ENCODE measurements at regions of chr1 and their contacts with region 1.

Region 1: DNA sequence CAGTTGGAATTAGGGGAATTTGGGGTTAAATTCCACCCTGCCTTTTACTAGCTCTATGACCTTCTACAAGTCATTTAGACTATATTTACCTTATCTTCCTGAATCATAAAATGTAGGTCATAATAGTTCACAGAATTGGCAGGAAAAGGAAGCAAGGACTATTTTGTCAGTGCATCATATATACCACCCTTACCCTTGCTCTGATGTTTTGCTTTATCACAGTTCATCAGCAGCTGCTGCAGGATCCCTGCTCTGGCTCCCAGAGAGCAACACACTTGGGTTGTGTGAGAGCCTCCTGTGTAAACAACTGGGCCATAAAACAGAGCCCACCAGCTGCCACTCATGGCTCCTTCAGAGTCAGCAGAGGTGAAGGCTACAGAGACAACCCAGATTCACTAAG is 631.6 kb upstream of the CAMK1G start:
- DNase-seq: peak; percentile 93
- H3K4me3 ChIP-seq: no peak overlapping the region
- H3K27ac ChIP-seq: peak overlapping the region; percentile 11
- H3K4me1 ChIP-seq: peaks cover 17% of the 10 kb centered on the region
- H3K27me3 ChIP-seq: no peaks in the 10 kb centered on the region
- CTCF ChIP-seq: no peak
- POLR2A ChIP-seq: peak; percentile 27

Region 2: DNA sequence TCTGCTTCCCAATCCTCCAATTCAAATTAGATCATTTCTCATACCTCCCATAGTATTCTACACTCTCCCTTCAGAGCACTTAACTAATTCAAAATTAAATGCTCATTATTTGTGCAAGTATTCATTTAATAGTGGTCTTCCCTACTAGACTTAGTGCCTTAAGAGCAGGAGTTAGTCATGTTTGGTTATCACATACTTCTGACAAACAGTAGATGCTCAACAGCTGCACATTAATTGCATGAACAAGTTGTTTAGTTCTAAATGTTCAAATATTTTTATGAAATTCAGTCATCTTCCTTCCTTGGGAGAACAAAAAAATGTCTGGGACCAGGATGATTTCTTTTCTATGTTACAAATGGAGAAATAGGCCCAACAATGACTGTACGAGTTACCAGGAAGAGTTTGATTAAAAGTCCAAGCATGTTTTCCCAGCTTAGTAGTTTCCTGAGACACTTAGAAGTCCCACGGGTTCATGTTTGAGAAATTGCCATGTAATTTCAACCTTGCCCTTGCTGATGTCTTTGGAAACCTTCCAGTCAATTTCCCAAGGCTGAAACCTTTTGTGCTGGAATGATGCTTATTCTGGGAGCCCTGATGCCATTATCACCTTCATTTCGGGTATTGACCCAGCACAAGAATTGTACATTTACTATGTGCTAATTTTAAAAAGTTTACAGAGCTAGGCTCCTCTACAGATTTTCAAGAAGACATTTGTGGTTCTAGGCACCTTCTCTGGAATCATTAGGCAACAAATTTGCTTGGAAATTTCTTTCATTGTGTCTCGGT is 269.8 kb before region 1 on chr1:
- CTCF ChIA-PET with region 1: no interaction called
- POLR2A ChIA-PET with region 1: no interaction called
- dilution Hi-C with region 1: no loop called
- intact Hi-C with region 1: loop called (anchors 2 kb)
- DNase-seq: peak; percentile 94
- H3K4me3 ChIP-seq: no peak overlapping the region
- H3K27ac ChIP-seq: peak overlapping the region; percentile 43
- H3K4me1 ChIP-seq: peaks cover 12% of the 10 kb centered on the region
- H3K27me3 ChIP-seq: no peaks in the 10 kb centered on the region
- CTCF ChIP-seq: no peak
- POLR2A ChIP-seq: no peak

Region 3: DNA sequence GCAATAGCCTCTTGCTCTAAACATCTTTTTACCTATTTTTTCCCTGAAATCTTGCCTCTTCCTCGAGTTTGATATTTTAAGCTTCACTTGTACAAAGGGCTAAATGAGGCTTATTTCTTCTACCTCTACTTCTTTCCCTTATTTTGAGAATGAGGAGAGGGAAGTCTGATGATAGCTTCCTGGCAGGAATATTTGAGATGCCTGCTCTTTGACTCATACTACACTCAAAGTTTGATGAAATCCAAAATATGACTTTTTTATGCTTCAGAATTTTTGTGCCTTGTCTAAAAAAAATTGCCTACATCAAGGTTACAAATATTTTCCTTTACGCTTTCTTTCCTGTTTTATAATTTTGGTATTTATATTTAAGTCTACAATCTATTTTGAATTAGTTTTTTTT is 83.4 kb before region 1 on chr1:
- CTCF ChIA-PET with region 1: no interaction called
- POLR2A ChIA-PET with region 1: no interaction called
- dilution Hi-C with region 1: no loop called
- intact Hi-C with region 1: loop called (anchors 5 kb)
- DNase-seq: peak; percentile 35
- H3K4me3 ChIP-seq: no peak overlapping the region
- H3K27ac ChIP-seq: no peak overlapping the region
- H3K4me1 ChIP-seq: peaks cover 6% of the 10 kb centered on the region
- H3K27me3 ChIP-seq: no peaks in the 10 kb centered on the region
- CTCF ChIP-seq: no peak
- POLR2A ChIP-seq: no peak

Region 4: GRCh38 chr1:208979776-208980175 is 27.9 kb after region 1 on chr1:
- CTCF ChIA-PET with region 1: no interaction called
- POLR2A ChIA-PET with region 1: no interaction called
- dilution Hi-C with region 1: no loop called
- intact Hi-C with region 1: loop called (anchors 2 kb)
- DNase-seq: no peak
- H3K4me3 ChIP-seq: no peak overlapping the region
- H3K27ac ChIP-seq: no peak overlapping the region
- H3K4me1 ChIP-seq: peaks cover 18% of the 10 kb centered on the region
- H3K27me3 ChIP-seq: no peaks in the 10 kb centered on the region
- CTCF ChIP-seq: no peak
- POLR2A ChIP-seq: no peak

Region 5: GRCh38 chr1:209038735-209039134 is 86.8 kb after region 1 on chr1:
- CTCF ChIA-PET with region 1: no interaction called
- POLR2A ChIA-PET with region 1: no interaction called
- dilution Hi-C with region 1: no loop called
- intact Hi-C with region 1: loop called (anchors 2 kb)
- DNase-seq: no peak
- H3K4me3 ChIP-seq: no peak overlapping the region
- H3K27ac ChIP-seq: no peak overlapping the region
- H3K4me1 ChIP-seq: peaks cover 7% of the 10 kb centered on the region
- H3K27me3 ChIP-seq: peaks cover 34 to 44% of the 10 kb centered on the region in 2 experiments
- CTCF ChIP-seq: no peak
- POLR2A ChIP-seq: no peak

Region 6: DNA sequence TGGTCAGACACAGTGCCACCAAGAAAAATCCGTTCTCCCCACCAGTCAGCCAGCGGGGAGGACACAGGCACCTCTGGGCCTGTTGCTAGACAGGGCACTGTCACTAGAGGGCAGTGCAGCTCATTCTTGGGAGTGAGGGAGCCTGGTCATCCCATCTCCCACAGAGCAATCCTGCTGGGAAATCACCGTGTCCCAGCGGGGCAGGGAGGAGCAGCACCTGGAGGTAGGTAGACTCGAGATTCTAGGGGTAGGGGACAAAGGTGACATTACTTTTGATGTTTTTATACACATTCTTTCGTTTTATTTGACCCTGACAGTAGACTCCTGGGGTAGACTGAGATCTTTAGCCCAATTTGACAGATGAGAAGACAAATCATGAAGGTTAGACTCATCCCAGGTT is 624.9 kb after region 1 on chr1:
- CTCF ChIA-PET with region 1: no interaction called
- POLR2A ChIA-PET with region 1: no interaction called
- dilution Hi-C with region 1: no loop called
- intact Hi-C with region 1: no loop called
- DNase-seq: peak; percentile 72
- H3K4me3 ChIP-seq: no peak overlapping the region
- H3K27ac ChIP-seq: no peak overlapping the region
- H3K4me1 ChIP-seq: peaks cover 8% of the 10 kb centered on the region
- H3K27me3 ChIP-seq: peaks cover 13 to 17% of the 10 kb centered on the region in 2 experiments
- CTCF ChIP-seq: peak; percentile 94 to 95
- POLR2A ChIP-seq: no peak

Measured in endothelial cell of umbilical vein (primary cell).